Sigmoid colon (tissue), 7 donors: ENCODE measurements at regions of chr10 and their contacts with region 1.

Region 1: GRCh38 chr10:26881600-26882331 is 21.0 kb upstream of the ABI1 start:
- DNase-seq: no peak
- H3K4me3 ChIP-seq: no peak overlapping the region
- H3K27ac ChIP-seq: no peak overlapping the region
- H3K4me1 ChIP-seq: no peaks in the 10 kb centered on the region
- H3K27me3 ChIP-seq: peaks cover 0 to 19% (median 0%) of the 10 kb centered on the region in 3 donors
- CTCF ChIP-seq: peak; percentile 47 to 67 (median 60)
- EP300 ChIP-seq: no peak
- POLR2A ChIP-seq: no peak

Region 2: GRCh38 chr10:26334932-26335573 is 546.7 kb before region 1 on chr10:
- intact Hi-C with region 1: loop called (anchors 2 kb)
- DNase-seq: peak; percentile 65
- H3K4me3 ChIP-seq: peak overlapping the region in 1 of 4 donors; percentile 1
- H3K27ac ChIP-seq: no peak overlapping the region
- H3K4me1 ChIP-seq: no peaks in the 10 kb centered on the region
- H3K27me3 ChIP-seq: no peaks in the 10 kb centered on the region
- CTCF ChIP-seq: peak; percentile 22 to 60 (median 38)
- EP300 ChIP-seq: no peak
- POLR2A ChIP-seq: no peak

Region 3: DNA sequence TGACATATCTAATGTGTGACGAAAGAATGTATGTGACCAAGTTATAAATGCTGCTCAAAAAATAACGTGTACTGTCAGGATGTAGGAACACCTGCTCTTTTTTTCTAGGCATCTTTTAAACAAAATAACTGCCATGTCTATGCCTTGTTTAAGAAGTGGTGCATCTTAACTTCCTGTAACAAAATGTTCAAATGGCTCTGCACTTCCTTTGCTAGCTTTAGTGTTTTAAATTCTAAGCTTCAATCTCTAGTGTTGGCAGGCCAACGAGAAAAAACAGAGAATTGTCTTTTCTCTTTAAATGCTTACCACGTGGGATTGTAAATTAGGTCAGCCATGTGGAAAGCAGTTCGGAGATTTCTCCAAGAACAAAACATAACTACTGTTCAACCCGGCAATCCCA is 198.8 kb before region 1 on chr10:
- intact Hi-C with region 1: loop called (anchors 5 kb)
- DNase-seq: no peak
- H3K4me3 ChIP-seq: no peak overlapping the region
- H3K27ac ChIP-seq: no peak overlapping the region
- H3K4me1 ChIP-seq: no peaks in the 10 kb centered on the region
- H3K27me3 ChIP-seq: peaks cover 0 to 3% (median 0%) of the 10 kb centered on the region in 3 donors
- CTCF ChIP-seq: no peak
- EP300 ChIP-seq: no peak
- POLR2A ChIP-seq: no peak

Region 4: GRCh38 chr10:26725837-26726727 is 155.7 kb before region 1 on chr10:
- intact Hi-C with region 1: loop called (anchors 1 kb)
- DNase-seq: peak; percentile 89
- H3K4me3 ChIP-seq: no peak overlapping the region
- H3K27ac ChIP-seq: no peak overlapping the region
- H3K4me1 ChIP-seq: no peaks in the 10 kb centered on the region
- H3K27me3 ChIP-seq: no peaks in the 10 kb centered on the region
- CTCF ChIP-seq: peak; percentile 38 to 78 (median 66)
- EP300 ChIP-seq: no peak
- POLR2A ChIP-seq: no peak

Region 5: DNA sequence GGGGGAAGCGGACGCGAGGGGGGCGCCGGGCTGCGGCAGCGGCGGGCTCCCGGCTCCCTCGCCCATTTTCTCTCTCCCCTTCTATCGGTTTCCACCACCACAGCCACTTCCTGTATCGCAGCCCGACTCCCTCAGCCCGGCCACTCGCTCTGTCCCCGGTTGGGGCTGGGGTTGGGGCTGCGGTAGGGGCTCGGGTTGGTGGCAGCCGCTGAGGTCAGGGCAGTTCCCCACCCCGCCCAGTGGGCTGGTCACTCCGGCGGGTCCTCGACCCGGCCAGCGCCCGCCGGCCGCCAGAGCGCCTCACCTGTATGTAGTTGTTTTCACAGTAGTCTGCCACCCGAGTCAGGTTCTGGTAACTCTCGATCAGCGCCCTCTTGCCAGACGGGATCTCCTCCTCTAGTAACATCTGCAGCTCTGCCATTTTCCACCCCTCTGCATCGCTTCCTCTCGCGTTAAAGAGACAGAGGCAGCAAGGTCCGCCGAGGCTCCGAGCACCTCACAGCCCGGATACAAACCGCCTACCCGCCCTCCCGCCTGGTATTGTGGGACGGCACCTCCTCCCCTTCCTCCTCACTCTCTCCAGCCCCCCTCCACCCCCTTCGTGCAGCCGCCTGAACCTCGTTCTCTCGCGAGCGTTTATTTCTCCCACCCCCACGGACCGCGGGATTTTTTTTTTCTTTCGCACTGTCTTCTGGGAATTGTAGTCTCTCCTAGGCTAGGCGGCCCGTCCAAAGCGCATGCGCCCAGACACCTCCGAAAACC is 21.1 kb before region 1 on chr10 and contains the start of gene ABI1:
- intact Hi-C with region 1: loop called (anchors 1 kb)
- DNase-seq: peak; percentile 99
- H3K4me3 ChIP-seq: peak within 1 kb of the TSS; percentile 71 to 96 (median 79)
- H3K27ac ChIP-seq: peak within 1 kb of the TSS; percentile 91 to 98 (median 94)
- H3K4me1 ChIP-seq: peaks cover 0 to 36% (median 31%) of the 10 kb centered on the region in 4 donors
- H3K27me3 ChIP-seq: no peaks in the 10 kb centered on the region
- CTCF ChIP-seq: no peak
- EP300 ChIP-seq: no peak
- POLR2A ChIP-seq: peak; percentile 98
- total RNA-seq, gene ABI1: 37.3 to 47.8 (median 42.7) TPM